Right lobe of liver (tissue), 6 donors: ENCODE measurements at regions of chr20 and their contacts with region 1.

Region 1: DNA sequence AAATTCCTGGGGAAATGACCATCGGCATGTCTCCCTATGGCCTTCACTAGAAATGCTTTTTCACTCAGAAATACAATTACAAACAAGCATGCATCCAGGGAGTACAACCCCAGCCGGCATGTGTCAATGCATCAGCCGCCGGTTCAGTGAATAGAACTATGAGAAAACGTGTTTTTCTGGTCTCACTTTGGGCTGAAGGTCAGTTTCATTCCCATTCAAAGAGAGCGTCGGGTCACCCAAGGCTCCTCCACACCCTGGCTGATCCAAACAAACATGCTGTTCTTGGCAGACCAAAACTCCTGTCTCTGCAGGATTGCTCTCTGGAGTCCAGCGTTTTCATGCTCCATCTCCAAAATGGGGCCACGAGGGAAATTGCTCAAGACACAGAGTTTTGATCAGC is 35.5 kb upstream of the NXT1 start:
- DNase-seq: no peak
- ATAC-seq: peak in 1 of 4 donors; percentile 24
- H3K4me3 ChIP-seq: no peak overlapping the region
- H3K27ac ChIP-seq: no peak overlapping the region
- H3K4me1 ChIP-seq: no peaks in the 10 kb centered on the region
- H3K27me3 ChIP-seq: no peaks in the 10 kb centered on the region
- CTCF ChIP-seq: no peak
- POLR2A ChIP-seq: no peak

Region 2: GRCh38 chr20:23257848-23258746 is 57.0 kb before region 1 on chr20:
- intact Hi-C with region 1: loop called in 1 of 2 experiments (anchors 10 kb)
- DNase-seq: no peak
- ATAC-seq: peak; percentile 68 to 89 (median 80)
- H3K4me3 ChIP-seq: no peak overlapping the region
- H3K27ac ChIP-seq: peak overlapping the region in 2 of 3 donors; percentile 21 to 67
- H3K4me1 ChIP-seq: no peaks in the 10 kb centered on the region
- H3K27me3 ChIP-seq: no peaks in the 10 kb centered on the region
- CTCF ChIP-seq: no peak
- POLR2A ChIP-seq: no peak

Region 3: DNA sequence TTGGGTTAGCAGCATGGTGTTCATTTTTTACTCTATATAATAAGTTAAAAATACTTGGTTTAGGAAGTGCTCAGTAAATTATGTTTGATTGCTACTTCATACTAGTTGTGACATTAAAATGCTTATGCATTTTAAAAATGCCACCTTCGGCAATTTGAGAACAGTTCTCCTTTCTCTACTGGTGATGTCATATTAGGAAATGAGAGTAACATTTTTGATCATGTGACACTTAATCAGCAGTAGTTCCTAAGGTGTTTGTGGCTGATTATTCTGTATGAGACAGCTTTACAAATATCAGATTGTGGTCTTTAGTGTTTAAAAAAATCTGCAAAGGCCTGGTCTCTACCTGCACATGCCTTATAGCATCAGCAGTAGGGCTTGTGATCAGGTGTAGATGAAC is 51.3 kb after region 1 on chr20:
- intact Hi-C with region 1: no loop called
- DNase-seq: no peak
- ATAC-seq: no peak
- H3K4me3 ChIP-seq: no peak overlapping the region
- H3K27ac ChIP-seq: no peak overlapping the region
- H3K4me1 ChIP-seq: peaks cover 0 to 38% (median 8%) of the 10 kb centered on the region in 4 donors
- H3K27me3 ChIP-seq: no peaks in the 10 kb centered on the region
- CTCF ChIP-seq: no peak
- POLR2A ChIP-seq: no peak